ENCODE measurements at regions of chr4 and their contacts with region 1.

Region 1: DNA sequence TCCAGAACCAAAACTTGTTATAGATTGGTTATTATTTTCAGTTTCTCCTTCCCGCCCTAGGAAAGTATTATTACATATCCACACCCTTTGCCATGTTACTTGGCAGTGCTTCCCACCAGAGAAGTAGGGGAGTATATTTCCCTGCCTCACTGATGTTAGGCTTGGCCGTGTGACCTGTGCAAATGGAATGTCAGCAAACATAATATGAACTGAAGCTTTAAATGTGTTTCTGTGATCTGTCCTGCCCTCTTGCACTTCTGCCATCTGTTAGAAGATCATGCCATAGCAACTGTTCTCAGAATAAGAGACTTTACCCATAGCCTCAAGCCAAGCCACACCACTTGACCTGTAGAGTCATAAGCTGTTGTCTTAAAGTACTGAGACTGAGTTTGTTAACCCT is 36.7 kb upstream of the NEUROG2 start:
- DNase-seq: peak; percentile 3
- H3K4me3 ChIP-seq: no peak overlapping the region
- CTCF ChIP-seq: no peak

Region 2: DNA sequence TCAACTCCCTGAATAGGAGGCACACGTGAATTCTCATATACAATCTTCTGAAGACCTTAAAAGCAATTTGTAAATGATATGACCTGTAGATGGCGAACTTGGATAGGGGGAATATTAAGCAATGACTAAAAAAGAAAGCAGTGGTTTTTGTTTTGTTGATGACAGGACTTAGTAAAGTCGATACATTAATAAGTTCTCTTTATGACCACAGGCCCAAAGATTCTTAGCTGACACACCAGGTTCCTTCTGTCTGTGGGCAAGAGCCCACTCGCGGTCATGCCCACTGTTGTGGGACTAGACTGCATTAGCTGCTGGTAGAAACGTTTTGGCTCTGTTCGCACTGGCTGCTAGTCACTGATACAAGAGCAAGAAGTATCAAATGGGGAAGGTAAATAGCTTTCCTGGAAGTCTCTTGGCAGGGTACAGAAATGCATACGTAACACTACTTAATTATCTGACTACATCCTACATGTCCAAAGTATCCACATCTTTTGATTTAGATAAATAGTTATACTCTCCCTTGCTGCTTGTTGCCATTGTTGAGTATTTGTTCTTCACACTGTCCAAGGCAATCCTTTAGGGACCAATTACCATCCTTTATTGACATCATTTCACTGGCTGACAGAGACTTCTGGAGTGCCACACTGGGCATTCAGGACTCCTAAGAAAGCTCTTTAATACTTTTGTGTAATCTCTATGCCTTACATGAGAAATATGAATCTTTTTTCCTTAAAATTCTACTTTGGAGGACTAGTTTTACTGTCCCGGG is 224.5 kb before region 1 on chr4:
- in situ Hi-C with region 1: loop called (anchors 25 kb)
- DNase-seq: peak; percentile 64
- H3K4me3 ChIP-seq: peak overlapping the region; percentile 18
- CTCF ChIP-seq: peak; percentile 42

Region 3: GRCh38 chr4:112453321-112453720 is 99.3 kb before region 1 on chr4:
- in situ Hi-C with region 1: no loop called
- DNase-seq: no peak
- H3K4me3 ChIP-seq: no peak overlapping the region
- CTCF ChIP-seq: no peak